Heart right ventricle (tissue), 16 donors: ENCODE measurements at regions of chr3 and their contacts with region 1.

Region 1: GRCh38 chr3:59013611-59014010 is 36.2 kb downstream of the CFAP20DC start:
- DNase-seq: no peak
- ATAC-seq: no peak
- H3K4me3 ChIP-seq: no peak overlapping the region
- H3K27ac ChIP-seq: no peak overlapping the region
- H3K4me1 ChIP-seq: no peaks in the 10 kb centered on the region
- H3K27me3 ChIP-seq: no peaks in the 10 kb centered on the region
- CTCF ChIP-seq: no peak

Region 2: GRCh38 chr3:58864480-58864879 is 149.1 kb before region 1 on chr3:
- intact Hi-C with region 1: loop called in 1 of 10 experiments (anchors 5 kb)
- DNase-seq: no peak
- ATAC-seq: no peak
- H3K4me3 ChIP-seq: no peak overlapping the region
- H3K27ac ChIP-seq: no peak overlapping the region
- H3K4me1 ChIP-seq: no peaks in the 10 kb centered on the region
- H3K27me3 ChIP-seq: peaks cover 0 to 6% (median 0%) of the 10 kb centered on the region in 7 donors
- CTCF ChIP-seq: no peak